Activated CD4-positive, alpha-beta T cell treated with anti-CD3 and anti-CD28 coated beads for 36 hours (primary cell): ENCODE measurements at regions of chr19 and their contacts with region 1.

Region 1: GRCh38 chr19:23273590-23274413 is 23.6 kb upstream of the ZNF724 start:
- DNase-seq: peak; percentile 96
- ATAC-seq: peak; percentile 99
- H3K4me3 Mint-ChIP-seq: peak overlapping the region; percentile 92
- H3K27ac Mint-ChIP-seq: peak overlapping the region; percentile 93
- H3K4me1 Mint-ChIP-seq: peaks cover 25% of the 10 kb centered on the region
- H3K27me3 Mint-ChIP-seq: no peaks in the 10 kb centered on the region

Region 2: GRCh38 chr19:21767065-21767800 is 1506.6 kb before region 1 on chr19 and contains the start of gene ZNF100:
- CTCF ChIA-PET with region 1: no interaction called
- POLR2A ChIA-PET with region 1: no interaction called
- intact Hi-C with region 1: loop called in 1 of 2 experiments (anchors 5 kb)
- DNase-seq: peak; percentile 94
- ATAC-seq: peak; percentile 98
- H3K4me3 Mint-ChIP-seq: peak within 1 kb of the TSS; percentile 98
- H3K27ac Mint-ChIP-seq: peak within 1 kb of the TSS; percentile 95
- H3K4me1 Mint-ChIP-seq: peaks cover 30% of the 10 kb centered on the region
- H3K27me3 Mint-ChIP-seq: no peaks in the 10 kb centered on the region
- total RNA-seq, gene ZNF100: 24.7 to 27.0 TPM

Region 3: DNA sequence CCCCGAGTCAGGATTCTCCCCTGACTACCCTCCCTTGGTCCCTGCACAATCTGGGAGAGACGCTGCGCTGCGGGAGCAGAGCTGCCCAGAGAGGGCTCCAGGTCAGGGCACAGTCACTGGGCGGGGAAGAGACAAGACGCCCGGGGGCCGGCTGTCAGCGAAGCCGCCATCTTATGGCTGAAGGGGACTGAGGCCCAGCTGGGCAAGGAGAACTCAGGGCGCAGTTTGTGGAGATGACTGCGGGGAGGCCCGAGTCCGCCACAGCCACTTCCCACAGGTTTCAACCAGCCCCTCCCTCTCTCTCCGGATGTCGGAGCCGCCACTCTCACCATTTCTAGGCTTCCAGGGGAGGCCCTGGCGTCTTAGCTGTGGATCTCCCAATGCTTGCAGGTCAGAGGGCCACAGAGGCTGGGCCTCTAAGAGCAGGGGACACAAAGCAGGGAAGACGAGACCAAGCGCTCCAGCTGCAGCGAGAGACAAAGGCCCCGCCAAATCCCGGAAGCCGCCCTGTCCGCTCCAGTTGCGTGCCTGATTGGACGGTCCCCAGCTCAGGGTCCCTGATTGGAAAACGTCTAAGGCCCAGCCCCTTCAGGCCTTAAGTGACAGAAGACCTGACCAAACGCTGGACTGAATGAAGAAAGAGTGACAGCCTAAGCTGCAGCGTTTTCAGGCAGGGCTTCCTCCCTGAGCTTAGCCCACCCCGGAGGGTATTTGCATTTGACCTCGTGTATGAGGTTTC is 23.7 kb before region 1 on chr19 and contains the start of gene ZNF724:
- CTCF ChIA-PET with region 1: interaction called, 4 read pairs
- POLR2A ChIA-PET with region 1: interaction called, 13 read pairs
- intact Hi-C with region 1: loop called (anchors 1 kb)
- DNase-seq: peak; percentile 94
- ATAC-seq: peak; percentile 100
- H3K4me3 Mint-ChIP-seq: peak within 1 kb of the TSS; percentile 87
- H3K27ac Mint-ChIP-seq: peak within 1 kb of the TSS; percentile 96
- H3K4me1 Mint-ChIP-seq: peaks cover 12% of the 10 kb centered on the region
- H3K27me3 Mint-ChIP-seq: no peaks in the 10 kb centered on the region
- total RNA-seq, gene ZNF724: 15.1 to 19.1 TPM

Region 4: GRCh38 chr19:23686621-23687423 is 413.0 kb after region 1 on chr19 and contains the start of gene ZNF675:
- CTCF ChIA-PET with region 1: interaction called, 4 read pairs
- POLR2A ChIA-PET with region 1: no interaction called
- intact Hi-C with region 1: loop called in 1 of 2 experiments (anchors 2 kb)
- DNase-seq: peak; percentile 95
- ATAC-seq: peak; percentile 97
- H3K4me3 Mint-ChIP-seq: peak within 1 kb of the TSS; percentile 98
- H3K27ac Mint-ChIP-seq: peak within 1 kb of the TSS; percentile 98
- H3K4me1 Mint-ChIP-seq: peaks cover 41% of the 10 kb centered on the region
- H3K27me3 Mint-ChIP-seq: no peaks in the 10 kb centered on the region
- total RNA-seq, gene ZNF675: 19.1 to 22.8 TPM

Region 5: GRCh38 chr19:24033301-24033962 is 759.6 kb after region 1 on chr19:
- CTCF ChIA-PET with region 1: no interaction called
- POLR2A ChIA-PET with region 1: no interaction called
- intact Hi-C with region 1: loop called in 1 of 2 experiments (anchors 1 kb)
- DNase-seq: peak; percentile 90
- ATAC-seq: peak; percentile 99
- H3K4me3 Mint-ChIP-seq: peak overlapping the region; percentile 99
- H3K27ac Mint-ChIP-seq: peak overlapping the region; percentile 98
- H3K4me1 Mint-ChIP-seq: peaks cover 36% of the 10 kb centered on the region
- H3K27me3 Mint-ChIP-seq: no peaks in the 10 kb centered on the region